RWPE1 (cell line): ENCODE measurements at regions of chr12 and their contacts with region 1.

Region 1: DNA sequence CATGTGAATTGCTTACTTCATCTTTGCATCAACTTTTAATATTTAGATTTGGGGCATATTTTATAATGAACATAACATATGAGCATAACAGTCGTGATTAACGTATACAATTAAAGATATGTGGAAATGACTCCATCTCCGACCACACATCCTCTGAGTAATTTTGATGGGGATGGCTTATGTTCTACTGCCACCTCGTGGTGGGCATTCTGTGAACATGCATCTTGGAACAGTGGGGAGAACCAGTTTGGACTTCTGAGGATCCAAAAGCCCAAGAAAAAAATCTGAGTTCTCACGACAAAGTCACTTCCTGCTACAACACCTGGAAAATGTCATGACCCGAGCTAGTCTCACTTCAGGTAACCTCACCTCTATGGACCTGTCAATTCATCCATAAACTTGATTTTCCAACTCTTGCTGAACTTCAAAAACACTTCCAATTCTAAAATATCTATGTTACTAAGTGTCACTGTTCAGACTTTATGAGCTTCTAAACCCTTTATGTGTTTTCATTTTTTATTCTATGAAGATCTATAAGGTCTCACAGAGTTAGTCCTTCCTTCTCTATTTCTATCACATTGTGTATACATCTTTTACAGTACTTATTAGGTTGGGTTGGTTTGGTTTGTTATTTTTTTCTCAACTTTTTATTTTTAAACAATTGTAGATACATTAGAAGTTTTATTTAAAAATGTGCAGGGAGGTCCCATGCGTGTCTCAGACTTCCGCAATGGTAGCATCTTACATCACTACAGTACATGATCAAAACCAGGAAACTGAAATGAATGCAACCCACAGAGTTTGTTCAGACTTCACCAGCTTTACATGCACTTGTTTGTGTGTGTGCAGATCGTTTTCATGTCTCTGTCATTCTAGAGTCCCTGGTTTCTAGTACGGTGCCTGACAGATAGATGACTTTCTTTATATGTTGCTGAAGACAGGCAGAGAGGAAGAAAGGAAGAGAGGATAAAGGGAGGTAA is 38.2 kb upstream of the STAB2 start:
- DNase-seq: peak; percentile 73
- H3K27ac ChIP-seq: no peak overlapping the region
- CTCF ChIP-seq: peak; percentile 80

Region 2: GRCh38 chr12:102883204-102883799 is 665.6 kb before region 1 on chr12:
- CTCF ChIA-PET with region 1: interaction called, 16 read pairs
- POLR2A ChIA-PET with region 1: no interaction called
- DNase-seq: peak; percentile 40
- H3K27ac ChIP-seq: no peak overlapping the region
- CTCF ChIP-seq: peak; percentile 87

Region 3: GRCh38 chr12:102948941-102949352 is 600.0 kb before region 1 on chr12:
- CTCF ChIA-PET with region 1: interaction called, 13 read pairs
- POLR2A ChIA-PET with region 1: no interaction called
- DNase-seq: peak; percentile 27
- H3K27ac ChIP-seq: no peak overlapping the region
- CTCF ChIP-seq: peak; percentile 84